Esophagus muscularis mucosa (tissue), 4 donors: ENCODE measurements at regions of chr4 and their contacts with region 1.

Region 1: GRCh38 chr4:154551872-154552686 is 1.9 kb upstream of the PLRG1 start:
- DNase-seq: no peak
- H3K4me3 ChIP-seq: no peak overlapping the region
- H3K27ac ChIP-seq: peak overlapping the region in 3 of 4 donors; percentile 12 to 79 (median 28)
- H3K4me1 ChIP-seq: peaks cover 10 to 27% (median 18%) of the 10 kb centered on the region in 4 donors
- H3K27me3 ChIP-seq: no peaks in the 10 kb centered on the region
- CTCF ChIP-seq: peak; percentile 76 to 85 (median 80)
- EP300 ChIP-seq: no peak
- POLR2A ChIP-seq: no peak

Region 2: DNA sequence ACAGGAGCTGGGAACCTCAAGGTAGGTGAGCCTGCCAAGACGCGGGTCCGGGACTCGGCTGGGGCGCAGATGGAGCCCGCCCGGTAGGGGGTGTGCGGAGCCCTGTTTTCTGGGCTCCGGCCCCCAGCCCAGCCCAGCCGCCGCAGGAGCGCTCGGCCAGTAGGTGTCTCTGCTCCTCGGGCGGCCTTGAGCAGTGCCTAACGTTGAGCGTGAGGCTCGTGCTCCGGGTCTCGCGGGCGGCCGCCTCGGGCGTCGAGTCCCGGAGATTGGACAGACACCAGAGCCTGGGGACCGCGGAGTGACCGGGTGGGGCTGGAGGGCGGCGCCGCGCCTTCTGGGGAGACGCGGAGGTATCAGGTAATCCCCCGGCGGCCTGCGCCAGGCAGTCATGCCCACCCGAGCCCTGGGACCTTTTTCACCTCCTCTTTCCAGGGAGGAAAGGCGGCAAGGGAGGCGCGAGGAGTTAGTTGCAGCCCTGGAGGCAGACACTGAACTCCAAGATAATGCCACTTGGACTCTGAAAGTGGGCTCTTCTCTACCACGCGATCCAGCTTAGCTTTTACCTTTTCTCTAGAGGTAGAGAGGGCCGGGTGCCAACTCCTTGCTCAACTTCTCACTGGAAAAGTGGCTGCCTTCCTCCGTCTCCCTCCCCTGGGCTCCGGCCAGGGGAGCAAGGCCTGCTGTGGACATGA is 74.9 kb after region 1 on chr4:
- intact Hi-C with region 1: loop called (anchors 5 kb)
- DNase-seq: no peak
- H3K4me3 ChIP-seq: peak overlapping the region; percentile 41 to 55 (median 46)
- H3K27ac ChIP-seq: no peak overlapping the region
- H3K4me1 ChIP-seq: peaks cover 8 to 13% (median 10%) of the 10 kb centered on the region in 4 donors
- H3K27me3 ChIP-seq: peaks cover 0 to 15% (median 0%) of the 10 kb centered on the region in 4 donors
- CTCF ChIP-seq: peak in 2 of 3 experiments; percentile 42 to 56
- EP300 ChIP-seq: no peak
- POLR2A ChIP-seq: no peak

Region 3: GRCh38 chr4:154779362-154779947 is 227.4 kb after region 1 on chr4:
- intact Hi-C with region 1: loop called (anchors 5 kb)
- DNase-seq: no peak
- H3K4me3 ChIP-seq: no peak overlapping the region
- H3K27ac ChIP-seq: no peak overlapping the region
- H3K4me1 ChIP-seq: no peaks in the 10 kb centered on the region
- H3K27me3 ChIP-seq: peaks cover 0 to 14% (median 3%) of the 10 kb centered on the region in 4 donors
- CTCF ChIP-seq: peak; percentile 33 to 61 (median 46)
- EP300 ChIP-seq: no peak
- POLR2A ChIP-seq: no peak